Activated naive CD4-positive, alpha-beta T cell treated with anti-CD3 and anti-CD28 coated beads for 36 hours (primary cell): ENCODE measurements at regions of chr6 and their contacts with region 1.

Region 1: DNA sequence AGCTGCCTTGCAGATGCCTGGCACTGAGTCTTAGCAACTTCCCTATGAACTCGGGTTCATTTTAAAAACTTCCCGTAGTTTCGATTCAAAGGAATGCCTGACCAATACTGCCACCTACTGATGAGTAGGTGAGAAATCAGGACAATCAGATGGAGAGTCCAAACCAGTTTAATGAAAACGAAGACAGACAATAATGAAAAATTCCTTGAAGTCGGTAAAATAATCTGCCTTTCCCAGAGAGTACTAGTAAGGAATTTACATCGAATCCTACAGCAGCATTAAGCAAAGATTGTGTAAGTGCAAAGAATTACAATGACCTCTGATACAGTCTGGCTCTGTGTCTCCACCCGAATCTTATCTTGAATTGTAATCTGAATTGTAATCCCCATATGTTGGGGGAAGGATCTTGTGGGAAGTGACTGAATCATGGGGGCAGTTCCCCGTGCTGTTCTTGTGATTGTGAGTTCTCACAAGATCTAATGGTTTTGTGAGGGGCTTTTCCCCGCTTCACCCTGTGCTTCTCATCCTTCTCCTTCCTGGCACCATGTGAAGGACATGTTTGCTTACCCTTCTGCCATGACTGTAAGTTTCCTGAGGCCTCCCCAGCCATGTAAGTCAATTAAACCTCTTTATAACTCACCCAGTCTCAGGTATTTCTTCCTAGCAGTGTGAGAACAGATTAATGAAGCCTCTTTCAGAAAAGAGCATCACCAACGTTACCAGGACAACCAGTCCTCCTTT is 134.4 kb downstream of the ARHGAP18 start:
- DNase-seq: no peak
- H3K4me3 Mint-ChIP-seq: no peak overlapping the region
- H3K27ac Mint-ChIP-seq: no peak overlapping the region
- H3K4me1 Mint-ChIP-seq: peaks cover 7% of the 10 kb centered on the region
- H3K27me3 Mint-ChIP-seq: no peaks in the 10 kb centered on the region

Region 2: DNA sequence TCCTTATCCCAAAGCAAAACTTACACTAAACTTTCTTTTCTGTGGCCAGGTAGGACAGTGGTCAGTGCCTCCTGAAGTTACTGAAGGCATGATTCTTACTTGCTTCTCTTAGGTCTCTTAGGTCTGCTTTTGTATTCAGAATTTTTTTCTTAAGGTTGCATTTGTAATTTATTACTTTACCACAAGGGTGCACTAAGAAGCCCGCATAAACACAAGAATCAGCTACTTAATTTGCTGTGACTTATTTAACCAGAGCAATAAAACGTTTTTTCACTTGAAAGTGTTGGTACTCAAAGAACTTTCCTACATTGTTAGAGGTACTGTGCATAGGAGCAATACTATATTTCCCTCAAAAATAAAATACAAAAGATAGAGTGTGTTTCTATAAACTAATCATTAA is 768.0 kb before region 1 on chr6:
- CTCF ChIA-PET with region 1: no interaction called
- intact Hi-C with region 1: loop called (anchors 1 kb)
- DNase-seq: no peak
- H3K4me3 Mint-ChIP-seq: no peak overlapping the region
- H3K27ac Mint-ChIP-seq: no peak overlapping the region
- H3K4me1 Mint-ChIP-seq: no peaks in the 10 kb centered on the region
- H3K27me3 Mint-ChIP-seq: peaks cover 9% of the 10 kb centered on the region

Region 3: GRCh38 chr6:129203190-129203900 is 372.2 kb before region 1 on chr6:
- CTCF ChIA-PET with region 1: no interaction called
- intact Hi-C with region 1: no loop called
- DNase-seq: no peak
- H3K4me3 Mint-ChIP-seq: no peak overlapping the region
- H3K27ac Mint-ChIP-seq: no peak overlapping the region
- H3K4me1 Mint-ChIP-seq: no peaks in the 10 kb centered on the region
- H3K27me3 Mint-ChIP-seq: peaks cover 8% of the 10 kb centered on the region

Region 4: GRCh38 chr6:129280749-129281148 is 294.8 kb before region 1 on chr6:
- CTCF ChIA-PET with region 1: no interaction called
- intact Hi-C with region 1: loop called (anchors 5 kb)
- DNase-seq: peak; percentile 76
- H3K4me3 Mint-ChIP-seq: peak overlapping the region; percentile 52
- H3K27ac Mint-ChIP-seq: peak overlapping the region; percentile 10
- H3K4me1 Mint-ChIP-seq: peaks cover 14% of the 10 kb centered on the region
- H3K27me3 Mint-ChIP-seq: no peaks in the 10 kb centered on the region